ENCODE measurements at regions of chr7 and their contacts with region 1.

Region 1: GRCh38 chr7:74429153-74429747 is 24.5 kb upstream of the GTF2IRD1 start:
- DNase-seq: peak in 1 of 2 donors; percentile 46
- H3K4me3 ChIP-seq: no peak overlapping the region
- H3K27ac ChIP-seq: peak overlapping the region in 1 of 3 donors; percentile 79
- H3K4me1 ChIP-seq: peaks cover 8 to 21% of the 10 kb centered on the region in 2 donors
- H3K27me3 ChIP-seq: no peaks in the 10 kb centered on the region
- CTCF ChIP-seq: no peak
- POLR2A ChIP-seq: no peak

Region 2: GRCh38 chr7:74535951-74536356 is 106.7 kb after region 1 on chr7:
- intact Hi-C with region 1: loop called (anchors 10 kb)
- DNase-seq: no peak
- H3K4me3 ChIP-seq: no peak overlapping the region
- H3K27ac ChIP-seq: peak overlapping the region; percentile 41 to 73 (median 63)
- H3K4me1 ChIP-seq: peaks cover 10 to 11% of the 10 kb centered on the region in 2 donors
- H3K27me3 ChIP-seq: no peaks in the 10 kb centered on the region
- CTCF ChIP-seq: no peak
- POLR2A ChIP-seq: no peak